Panc1 (cell line): ENCODE measurements at regions of chr22 and their contacts with region 1.

Region 1: GRCh38 chr22:46309526-46310085 is 12.9 kb downstream of the GTSE1 start:
- DNase-seq: no peak
- ATAC-seq: no peak
- H3K4me3 ChIP-seq: no peak overlapping the region
- H3K27ac ChIP-seq: no peak overlapping the region
- H3K4me1 ChIP-seq: no peaks in the 10 kb centered on the region
- H3K27me3 ChIP-seq: no peaks in the 10 kb centered on the region
- CTCF ChIP-seq: no peak

Region 2: GRCh38 chr22:45994491-45995404 is 314.9 kb before region 1 on chr22:
- CTCF ChIA-PET with region 1: no interaction called
- POLR2A ChIA-PET with region 1: no interaction called
- in situ Hi-C with region 1: no loop called
- intact Hi-C with region 1: loop called (anchors 5 kb)
- DNase-seq: no peak
- ATAC-seq: peak; percentile 88
- H3K4me3 ChIP-seq: no peak overlapping the region
- H3K27ac ChIP-seq: 0 out of 2 replicates have a peak overlapping the region, but pooled peaks have one; percentile 54
- H3K4me1 ChIP-seq: peaks cover 16% of the 10 kb centered on the region
- H3K27me3 ChIP-seq: no peaks in the 10 kb centered on the region
- CTCF ChIP-seq: peak; percentile 88

Region 3: DNA sequence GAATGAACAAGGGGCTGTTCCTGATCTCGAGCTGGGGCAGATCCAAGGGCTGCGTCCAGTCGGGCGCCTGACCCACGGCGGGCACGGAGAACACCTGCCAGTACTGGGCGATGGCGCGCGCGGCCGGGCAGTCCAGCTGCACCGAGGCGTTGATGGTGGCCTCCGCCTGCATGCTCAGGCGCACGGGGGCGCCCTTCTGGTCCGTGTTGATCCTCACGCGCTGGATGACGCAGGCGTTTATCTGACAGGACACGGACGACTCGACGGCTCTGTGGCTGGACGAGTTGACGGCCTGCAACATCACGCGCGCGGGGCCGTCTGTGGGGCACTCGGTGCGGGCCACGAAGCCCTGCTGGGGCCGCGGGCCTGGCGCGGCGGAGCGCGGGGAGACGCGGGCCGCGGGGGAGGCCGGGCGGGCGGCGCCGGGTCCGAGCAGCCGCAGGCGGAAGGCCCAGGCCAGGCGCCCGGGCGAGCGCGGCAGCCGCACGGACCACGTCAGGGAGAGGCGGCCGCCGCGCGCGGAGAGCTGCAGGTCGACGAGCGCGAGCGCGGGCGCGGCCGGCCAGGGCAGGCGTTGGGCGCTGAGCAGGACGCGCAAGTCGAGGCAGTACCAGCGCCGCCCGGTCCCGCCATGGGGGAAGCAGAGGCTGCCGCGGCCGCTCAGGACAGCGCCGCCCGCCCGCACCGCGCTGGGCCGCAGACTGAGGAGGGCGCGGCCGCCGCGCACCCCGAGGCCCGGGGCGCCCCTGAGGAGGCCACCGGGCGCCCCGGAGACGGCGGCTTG is 47.0 kb before region 1 on chr22:
- CTCF ChIA-PET with region 1: no interaction called
- POLR2A ChIA-PET with region 1: interaction called, 14 read pairs
- in situ Hi-C with region 1: no loop called
- intact Hi-C with region 1: no loop called
- DNase-seq: no peak
- ATAC-seq: no peak
- H3K4me3 ChIP-seq: no peak overlapping the region
- H3K27ac ChIP-seq: no peak overlapping the region
- H3K4me1 ChIP-seq: no peaks in the 10 kb centered on the region
- H3K27me3 ChIP-seq: no peaks in the 10 kb centered on the region
- CTCF ChIP-seq: no peak

Region 4: DNA sequence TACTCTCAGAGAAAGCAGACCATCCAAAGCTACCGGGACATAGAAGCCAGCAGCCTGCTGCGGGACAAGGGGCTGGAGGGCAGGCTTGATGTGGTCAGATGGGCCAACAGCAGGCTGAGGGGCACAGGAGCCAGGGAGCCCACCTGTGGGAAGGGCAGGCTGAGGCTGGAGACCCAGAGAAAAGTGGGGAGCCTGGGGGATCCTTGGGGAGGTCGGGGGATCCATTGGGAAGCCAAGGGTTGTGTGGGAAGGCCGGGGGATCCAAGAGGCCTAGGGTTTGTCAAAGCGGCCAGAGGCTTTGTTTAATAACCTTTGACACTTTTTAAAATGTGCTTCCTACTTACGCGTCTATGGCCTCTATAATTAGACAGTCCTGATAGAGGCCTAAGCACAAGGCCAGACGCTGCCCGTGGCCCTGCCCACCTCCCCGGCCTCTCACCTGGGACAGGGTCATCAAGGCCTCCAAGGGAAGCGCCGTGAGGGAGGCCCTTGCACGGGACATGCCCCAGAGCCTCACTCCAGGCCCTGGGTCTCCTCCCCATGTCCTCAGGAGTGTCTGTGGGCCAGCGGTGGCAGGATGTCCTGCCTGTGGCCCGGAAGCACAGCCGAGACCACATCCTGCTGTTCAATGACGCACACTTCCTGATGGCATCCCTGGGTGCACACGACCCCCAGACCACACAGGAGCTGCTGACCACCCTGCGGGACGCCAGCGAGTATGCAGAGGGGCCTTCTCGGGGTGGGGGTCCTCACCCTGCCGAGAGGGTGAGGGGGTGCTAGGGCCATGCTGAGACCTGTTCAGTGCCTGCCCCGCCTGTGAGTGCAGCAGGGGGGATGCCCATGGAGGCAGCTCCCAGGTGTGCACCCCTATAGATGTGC is 21.5 kb before region 1 on chr22:
- CTCF ChIA-PET with region 1: no interaction called
- POLR2A ChIA-PET with region 1: no interaction called
- in situ Hi-C with region 1: no loop called
- intact Hi-C with region 1: no loop called
- DNase-seq: no peak
- ATAC-seq: no peak
- H3K4me3 ChIP-seq: no peak overlapping the region
- H3K27ac ChIP-seq: no peak overlapping the region
- H3K4me1 ChIP-seq: no peaks in the 10 kb centered on the region
- H3K27me3 ChIP-seq: no peaks in the 10 kb centered on the region
- CTCF ChIP-seq: no peak

Region 5: GRCh38 chr22:46338636-46339035 is 29.0 kb after region 1 on chr22:
- CTCF ChIA-PET with region 1: no interaction called
- POLR2A ChIA-PET with region 1: interaction called, 13 read pairs
- in situ Hi-C with region 1: no loop called
- intact Hi-C with region 1: no loop called
- DNase-seq: no peak
- ATAC-seq: no peak
- H3K4me3 ChIP-seq: no peak overlapping the region
- H3K27ac ChIP-seq: no peak overlapping the region
- H3K4me1 ChIP-seq: no peaks in the 10 kb centered on the region; the same call in 1 of the 2 replicates
- H3K27me3 ChIP-seq: no peaks in the 10 kb centered on the region
- CTCF ChIP-seq: no peak